Caco-2 (cell line): ENCODE measurements at regions of chr10 and their contacts with region 1.

Region 1: DNA sequence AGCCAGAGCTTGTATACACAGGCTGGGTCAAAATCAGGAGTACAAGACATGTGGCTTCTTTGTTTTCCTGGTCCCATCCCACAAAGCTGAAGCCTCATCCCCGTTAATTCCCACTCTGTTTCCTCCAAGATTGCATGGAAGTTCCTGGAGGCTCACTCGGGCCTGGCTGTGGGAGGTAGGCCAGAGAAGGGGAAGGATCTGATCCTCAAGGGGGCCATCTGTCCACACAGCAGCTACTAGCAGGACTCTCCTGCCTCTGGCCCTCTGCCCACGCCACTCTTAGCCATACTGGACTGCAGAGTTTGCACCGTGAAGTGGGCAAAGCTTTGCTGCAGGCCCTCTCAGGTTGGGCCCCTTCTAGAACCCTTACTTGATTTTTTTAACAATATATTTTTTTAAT is 160.6 kb downstream of the FGFR2 start:
- DNase-seq: peak in 1 of 2 experiments; percentile 43
- H3K4me3 ChIP-seq: no peak overlapping the region
- H3K4me3 Mint-ChIP-seq: peak overlapping the region; percentile 27
- H3K27ac Mint-ChIP-seq: peak overlapping the region; percentile 94
- H3K4me1 ChIP-seq: peaks cover 74% of the 10 kb centered on the region
- H3K4me1 Mint-ChIP-seq: peaks cover 45% of the 10 kb centered on the region
- H3K27me3 ChIP-seq: no peaks in the 10 kb centered on the region
- H3K27me3 Mint-ChIP-seq: no peaks in the 10 kb centered on the region
- CTCF ChIP-seq: no peak

Region 2: DNA sequence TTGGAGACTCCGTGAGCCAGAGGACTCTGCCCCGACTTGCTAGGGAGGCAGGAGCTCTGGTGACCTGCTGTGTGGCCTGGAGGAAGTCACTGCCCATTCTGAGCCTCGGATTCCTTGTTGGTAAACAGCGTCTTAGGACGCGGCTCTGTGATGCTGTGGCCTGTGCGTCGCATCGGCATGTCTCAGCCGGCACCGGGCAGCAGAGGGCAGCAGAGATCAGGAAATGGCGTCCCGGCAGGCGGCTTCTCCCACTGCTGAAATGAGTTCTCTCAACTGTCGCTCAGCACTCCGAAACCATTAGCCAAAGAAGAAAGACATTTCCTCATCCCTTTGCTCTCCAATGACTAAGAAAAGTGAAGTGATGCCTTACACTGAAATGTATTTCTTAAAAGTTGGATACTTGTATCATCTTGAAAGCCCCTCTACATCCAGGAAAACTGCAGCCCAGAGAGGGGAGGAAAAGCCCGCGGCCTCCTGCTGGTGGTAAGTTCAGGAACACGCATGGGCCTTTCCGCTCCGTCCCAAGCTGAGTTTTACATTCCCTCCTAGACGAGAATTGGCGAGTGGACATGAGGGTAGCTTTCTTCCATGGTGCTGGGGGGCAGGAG is 494.7 kb before region 1 on chr10:
- CTCF ChIA-PET with region 1: no interaction called
- POLR2A ChIA-PET with region 1: no interaction called
- intact Hi-C with region 1: loop called (anchors 10 kb)
- DNase-seq: peak; percentile 81 to 92
- H3K4me3 ChIP-seq: no peak overlapping the region
- H3K4me3 Mint-ChIP-seq: no peak overlapping the region
- H3K27ac Mint-ChIP-seq: peak overlapping the region; percentile 83
- H3K4me1 ChIP-seq: peaks cover 13% of the 10 kb centered on the region
- H3K4me1 Mint-ChIP-seq: peaks cover 13% of the 10 kb centered on the region
- H3K27me3 ChIP-seq: no peaks in the 10 kb centered on the region
- H3K27me3 Mint-ChIP-seq: no peaks in the 10 kb centered on the region
- CTCF ChIP-seq: peak; percentile 85 to 93

Region 3: DNA sequence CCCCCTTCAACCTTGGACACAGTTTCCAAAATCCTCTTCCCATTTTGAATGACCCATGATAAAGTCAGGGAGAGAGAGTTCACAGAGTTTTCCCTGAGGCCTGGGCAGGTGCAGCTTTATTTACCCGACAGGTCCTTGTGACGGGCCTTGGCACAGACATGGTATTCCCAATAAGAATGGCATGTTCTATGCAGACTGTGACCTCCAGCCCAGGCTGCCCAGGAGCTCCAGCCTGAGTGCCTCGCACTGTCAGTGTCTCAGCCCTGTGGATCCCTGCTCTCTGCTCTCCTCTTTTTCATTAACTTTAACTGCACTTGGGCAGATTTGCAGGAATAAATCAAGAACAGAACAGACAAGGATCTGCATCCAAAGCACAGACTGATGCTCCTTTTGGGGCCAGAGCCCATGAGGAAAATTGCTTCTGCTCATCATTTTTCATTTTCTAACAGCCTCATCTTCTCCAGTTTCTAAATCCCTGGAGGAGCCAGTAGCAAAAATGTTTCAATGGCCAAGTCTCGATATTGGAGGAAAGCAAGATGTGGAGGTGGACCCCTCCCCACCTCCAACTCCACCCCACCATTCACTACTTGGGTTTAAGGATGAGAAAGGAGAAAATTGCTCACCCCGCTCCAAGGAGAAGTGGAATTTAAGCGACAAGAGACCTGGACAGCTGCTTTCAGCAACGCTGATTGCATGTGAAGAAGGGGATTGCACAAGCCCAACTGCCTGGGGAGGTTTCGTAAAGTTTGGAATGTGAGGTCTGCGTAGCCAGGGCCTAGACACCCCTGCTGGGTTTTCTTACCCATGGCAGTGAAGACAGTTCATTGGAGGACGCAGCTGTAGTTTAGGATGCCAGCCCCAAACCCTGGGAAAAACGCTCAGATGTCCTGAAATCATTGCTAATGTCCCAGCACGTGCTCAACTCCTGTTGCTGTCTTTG is 360.6 kb before region 1 on chr10:
- CTCF ChIA-PET with region 1: no interaction called
- POLR2A ChIA-PET with region 1: no interaction called
- intact Hi-C with region 1: loop called (anchors 5 kb)
- DNase-seq: peak; percentile 81
- H3K4me3 ChIP-seq: no peak overlapping the region
- H3K4me3 Mint-ChIP-seq: peak overlapping the region; percentile 43
- H3K27ac Mint-ChIP-seq: peak overlapping the region; percentile 68
- H3K4me1 ChIP-seq: peaks cover 75% of the 10 kb centered on the region
- H3K4me1 Mint-ChIP-seq: peaks cover 58% of the 10 kb centered on the region
- H3K27me3 ChIP-seq: no peaks in the 10 kb centered on the region
- H3K27me3 Mint-ChIP-seq: no peaks in the 10 kb centered on the region
- CTCF ChIP-seq: no peak

Region 4: DNA sequence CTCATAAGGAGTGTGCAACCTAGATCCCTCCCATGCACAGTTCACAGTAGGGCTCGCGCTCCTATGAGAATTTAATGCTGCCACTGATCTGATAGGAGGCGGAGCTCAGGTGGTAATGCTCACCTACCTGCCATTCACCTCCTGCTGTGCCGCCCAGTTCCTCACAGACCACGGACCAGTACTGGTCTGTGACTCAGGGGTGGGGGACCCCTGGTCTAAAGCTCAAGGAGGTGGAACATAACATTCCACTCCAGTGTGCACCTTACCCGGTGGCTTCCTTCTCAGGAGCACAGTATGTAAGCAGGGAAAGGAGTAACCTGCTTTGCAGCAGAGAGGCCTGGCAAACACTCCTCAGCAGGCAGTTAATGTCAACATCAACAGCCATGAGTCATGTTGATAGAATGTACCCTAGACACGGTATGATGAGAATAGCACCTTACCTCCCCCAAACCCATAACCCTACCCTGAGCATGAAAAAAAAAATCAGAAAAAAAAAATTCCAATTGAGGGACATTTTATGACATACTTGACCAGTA is 112.8 kb before region 1 on chr10:
- CTCF ChIA-PET with region 1: no interaction called
- POLR2A ChIA-PET with region 1: no interaction called
- intact Hi-C with region 1: loop called (anchors 5 kb)
- DNase-seq: peak; percentile 45 to 58
- H3K4me3 ChIP-seq: no peak overlapping the region
- H3K4me3 Mint-ChIP-seq: no peak overlapping the region
- H3K27ac Mint-ChIP-seq: peak overlapping the region; percentile 91
- H3K4me1 ChIP-seq: peaks cover 27% of the 10 kb centered on the region
- H3K4me1 Mint-ChIP-seq: peaks cover 31% of the 10 kb centered on the region
- H3K27me3 ChIP-seq: no peaks in the 10 kb centered on the region
- H3K27me3 Mint-ChIP-seq: no peaks in the 10 kb centered on the region
- CTCF ChIP-seq: no peak

Region 5: DNA sequence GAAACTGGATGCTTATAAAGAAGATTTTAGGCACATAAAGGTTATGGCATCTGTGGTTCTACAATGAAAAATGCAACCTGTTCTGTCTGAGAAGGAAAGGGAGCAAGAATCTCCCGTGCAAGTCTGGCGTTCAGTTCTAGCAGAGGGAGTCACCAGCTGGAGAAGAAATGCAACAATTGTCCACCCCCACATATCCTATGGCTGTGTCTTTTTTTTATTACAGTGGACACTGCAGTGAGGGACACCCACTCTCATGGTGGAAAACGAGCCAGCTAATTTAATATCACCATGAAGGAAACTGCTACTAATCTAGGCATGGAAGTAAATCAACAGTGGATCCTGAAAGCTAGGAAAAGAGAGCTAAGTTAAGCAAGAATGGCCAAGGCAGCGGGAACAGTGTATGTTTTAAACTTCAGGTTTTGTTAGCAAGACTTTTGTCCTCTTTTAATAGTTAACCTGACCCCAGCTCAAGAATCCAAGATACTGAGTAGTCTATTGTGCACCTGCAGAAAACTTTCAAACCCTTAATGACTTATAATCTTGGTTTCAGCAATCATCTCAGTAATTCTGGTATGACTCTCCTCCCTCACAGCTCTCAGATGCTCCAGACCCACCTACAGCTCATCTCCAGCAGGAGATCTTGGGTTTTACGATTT is 11.3 kb after region 1 on chr10:
- CTCF ChIA-PET with region 1: interaction called, 4 read pairs
- POLR2A ChIA-PET with region 1: interaction called, 3 read pairs
- intact Hi-C with region 1: loop called (anchors 1 kb)
- DNase-seq: peak; percentile 24 to 53
- H3K4me3 ChIP-seq: 0 out of 2 replicates have a peak overlapping the region, but pooled peaks have one; percentile 0
- H3K4me3 Mint-ChIP-seq: peak overlapping the region; percentile 54
- H3K27ac Mint-ChIP-seq: peak overlapping the region; percentile 66
- H3K4me1 ChIP-seq: peaks cover 59% of the 10 kb centered on the region
- H3K4me1 Mint-ChIP-seq: peaks cover 39% of the 10 kb centered on the region
- H3K27me3 ChIP-seq: no peaks in the 10 kb centered on the region
- H3K27me3 Mint-ChIP-seq: no peaks in the 10 kb centered on the region
- CTCF ChIP-seq: no peak

Region 6: GRCh38 chr10:121500674-121501332 is 63.2 kb after region 1 on chr10:
- CTCF ChIA-PET with region 1: interaction called, 5 read pairs
- POLR2A ChIA-PET with region 1: no interaction called
- intact Hi-C with region 1: loop called (anchors 2 kb)
- DNase-seq: peak; percentile 89 to 94
- H3K4me3 ChIP-seq: no peak overlapping the region
- H3K4me3 Mint-ChIP-seq: peak overlapping the region; percentile 56
- H3K27ac Mint-ChIP-seq: peak overlapping the region; percentile 90
- H3K4me1 ChIP-seq: peaks cover 47% of the 10 kb centered on the region
- H3K4me1 Mint-ChIP-seq: peaks cover 32% of the 10 kb centered on the region
- H3K27me3 ChIP-seq: no peaks in the 10 kb centered on the region
- H3K27me3 Mint-ChIP-seq: no peaks in the 10 kb centered on the region
- CTCF ChIP-seq: no peak

Region 7: DNA sequence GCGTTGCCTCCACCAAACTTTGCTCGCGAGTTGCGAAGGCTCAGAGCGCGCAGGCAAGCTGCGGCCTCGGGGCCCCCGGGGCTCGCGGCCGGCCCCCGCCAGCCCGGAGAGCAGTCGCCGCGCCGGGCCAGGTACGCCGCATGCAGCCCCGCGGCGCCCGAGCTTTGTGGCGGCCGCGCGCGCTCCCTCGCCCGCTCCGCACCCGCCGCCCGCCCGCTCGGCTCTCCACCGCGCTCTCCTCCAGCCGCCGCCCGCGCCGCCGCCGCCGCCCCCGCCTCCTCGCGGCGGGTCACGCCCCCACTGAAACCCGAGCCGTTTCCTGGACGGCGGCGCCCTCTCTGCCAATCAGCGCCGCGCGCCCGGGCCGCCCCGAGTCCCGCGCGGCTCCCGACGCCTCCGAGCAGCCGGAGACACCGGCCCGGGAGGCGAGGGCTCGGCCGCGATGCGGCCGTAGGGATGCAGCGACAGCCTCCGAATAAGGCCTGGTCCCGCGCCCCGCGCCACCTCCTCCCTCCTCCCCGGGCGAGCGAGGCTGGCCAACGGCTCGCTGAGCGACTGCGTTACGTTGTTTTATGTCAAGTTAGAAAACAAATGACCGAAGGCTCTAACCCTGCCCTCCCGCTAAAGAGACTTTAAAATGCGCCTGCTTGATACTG is 160.7 kb after region 1 on chr10 and contains the start of gene FGFR2:
- CTCF ChIA-PET with region 1: interaction called, 4 read pairs
- POLR2A ChIA-PET with region 1: no interaction called
- intact Hi-C with region 1: loop called (anchors 5 kb)
- DNase-seq: peak; percentile 88 to 95
- H3K4me3 ChIP-seq: peak within 1 kb of the TSS; percentile 98
- H3K4me3 Mint-ChIP-seq: peak within 1 kb of the TSS; percentile 95
- H3K27ac Mint-ChIP-seq: peak within 1 kb of the TSS; percentile 91
- H3K4me1 ChIP-seq: peaks cover 39% of the 10 kb centered on the region
- H3K4me1 Mint-ChIP-seq: peaks cover 18% of the 10 kb centered on the region
- H3K27me3 ChIP-seq: no peaks in the 10 kb centered on the region
- H3K27me3 Mint-ChIP-seq: no peaks in the 10 kb centered on the region
- CTCF ChIP-seq: no peak
- total RNA-seq, gene FGFR2: 266 and 286 TPM in 2 replicates